H1 (cell line): ENCODE measurements at regions of chr10 and their contacts with region 1.

Region 1: DNA sequence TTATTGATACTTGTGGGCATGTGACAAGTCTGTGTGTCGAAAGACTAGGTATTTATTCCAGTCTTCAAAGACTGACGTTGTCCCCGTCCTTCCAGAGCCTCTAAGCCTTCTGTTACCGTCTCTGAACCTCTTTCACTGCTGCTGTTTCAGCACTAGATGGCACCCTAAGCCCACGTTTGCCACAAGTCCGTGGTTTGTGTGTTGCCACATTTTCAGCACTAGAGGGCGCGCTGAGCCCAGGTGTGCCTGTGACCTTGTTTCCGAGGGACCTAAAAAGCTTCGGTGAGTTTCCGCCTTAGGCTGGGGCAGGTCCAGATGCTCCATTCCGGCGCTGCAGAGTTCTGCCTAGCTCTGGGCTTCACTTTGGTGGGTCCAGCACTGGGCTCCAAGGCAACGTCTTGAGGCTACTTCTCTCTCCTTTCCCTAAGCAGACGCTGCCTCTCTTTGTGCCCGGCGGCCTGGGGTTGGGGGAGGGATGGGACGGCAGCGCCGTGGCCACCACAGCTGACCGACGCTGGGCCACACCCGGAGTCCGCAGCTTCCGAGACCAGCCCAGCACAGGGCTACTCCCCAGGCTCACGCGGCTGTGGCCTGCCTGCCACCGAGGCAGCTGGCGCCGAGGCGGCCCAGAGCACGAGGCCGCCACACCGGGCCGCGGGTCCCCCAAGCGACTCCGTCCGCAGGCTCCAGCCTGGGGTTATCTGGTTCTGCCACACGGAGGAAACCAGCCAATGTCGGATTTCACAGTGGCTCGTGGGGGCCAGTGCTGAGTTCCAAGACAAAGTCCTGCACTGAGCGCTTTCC is 520.2 kb downstream of the REEP3 start:
- DNase-seq: peak; percentile 84 to 92
- H3K4me3 ChIP-seq: no peak overlapping the region
- H3K27ac ChIP-seq: no peak overlapping the region
- H3K4me1 ChIP-seq: no peaks in the 10 kb centered on the region; a peak in 1 of 7 replicates
- H3K27me3 ChIP-seq: no peaks in the 10 kb centered on the region
- CTCF ChIP-seq: peak; percentile 98 to 100 (median 100)
- EP300 ChIP-seq: no peak; a peak in 1 of 3 replicates
- POLR2A ChIP-seq: no peak
- RAD21 ChIP-seq: peak; percentile 100

Region 2: DNA sequence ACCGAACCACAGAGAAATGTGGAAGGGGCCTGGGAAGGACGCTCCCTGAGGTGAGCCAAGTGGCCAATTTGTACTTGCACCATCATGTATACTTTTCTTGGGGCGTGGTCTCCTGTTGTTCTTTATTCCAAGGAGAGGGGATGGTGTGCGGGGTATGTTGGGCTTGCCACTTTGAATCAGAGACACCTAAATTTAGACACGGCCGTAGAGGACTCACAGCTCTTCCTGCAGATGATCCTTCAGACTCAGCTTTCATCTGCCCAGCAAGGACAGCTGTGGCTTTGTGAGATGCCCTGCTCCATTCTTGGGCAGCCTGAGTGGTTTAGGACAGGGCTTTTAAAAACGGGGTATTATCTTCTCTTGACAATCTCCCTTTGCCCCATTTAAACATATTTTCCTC is 47.0 kb before region 1 on chr10:
- CTCF ChIA-PET with region 1: no interaction called
- POLR2A ChIA-PET with region 1: no interaction called
- DNase-seq: no peak
- H3K4me3 ChIP-seq: no peak overlapping the region
- H3K27ac ChIP-seq: no peak overlapping the region
- H3K4me1 ChIP-seq: no peaks in the 10 kb centered on the region
- H3K27me3 ChIP-seq: no peaks in the 10 kb centered on the region
- CTCF ChIP-seq: no peak
- EP300 ChIP-seq: no peak
- POLR2A ChIP-seq: no peak
- RAD21 ChIP-seq: no peak

Region 3: DNA sequence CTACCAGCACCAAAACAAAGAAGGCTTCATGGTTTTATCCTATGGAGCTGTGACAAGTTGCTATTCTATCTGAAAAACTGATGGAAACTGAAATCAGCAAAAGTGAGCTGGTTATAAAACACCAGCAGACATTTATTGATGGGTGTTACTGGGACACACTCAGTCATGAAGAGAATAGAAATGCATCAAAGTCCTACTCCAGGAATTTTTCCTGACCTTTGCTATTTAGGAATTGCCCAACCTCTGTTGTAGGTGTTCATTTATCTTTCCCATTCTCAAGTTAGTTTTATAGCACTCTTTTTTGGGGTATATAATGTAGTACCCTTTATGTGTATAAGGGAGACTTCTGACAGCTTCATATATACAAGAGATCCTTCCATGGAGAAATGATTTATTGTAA is 13.0 kb after region 1 on chr10:
- CTCF ChIA-PET with region 1: interaction called, 11 read pairs
- POLR2A ChIA-PET with region 1: no interaction called
- DNase-seq: no peak
- H3K4me3 ChIP-seq: no peak overlapping the region
- H3K27ac ChIP-seq: no peak overlapping the region
- H3K4me1 ChIP-seq: no peaks in the 10 kb centered on the region
- H3K27me3 ChIP-seq: no peaks in the 10 kb centered on the region
- CTCF ChIP-seq: no peak
- EP300 ChIP-seq: no peak
- POLR2A ChIP-seq: no peak
- RAD21 ChIP-seq: no peak

Region 4: DNA sequence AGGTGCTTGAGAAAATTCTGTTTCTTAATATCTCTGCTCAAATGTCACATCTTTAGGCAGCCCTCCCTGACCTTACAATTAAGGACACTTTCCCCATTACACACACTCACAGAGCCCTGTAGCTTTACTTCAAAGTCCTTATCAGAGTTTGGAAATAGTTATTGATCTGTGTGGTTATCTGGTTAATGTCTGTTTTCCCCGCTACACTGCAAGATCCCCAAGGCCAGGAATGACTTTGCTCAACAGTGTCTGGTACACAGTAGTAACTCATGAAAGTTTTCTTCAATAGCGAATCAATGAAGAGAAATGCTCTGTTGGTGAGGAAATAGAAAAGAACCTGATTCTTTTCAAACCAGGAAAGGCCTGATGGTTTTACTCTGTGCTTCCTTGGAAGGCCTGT is 34.2 kb after region 1 on chr10:
- CTCF ChIA-PET with region 1: interaction called, 10 read pairs
- POLR2A ChIA-PET with region 1: no interaction called
- DNase-seq: no peak
- H3K4me3 ChIP-seq: no peak overlapping the region
- H3K27ac ChIP-seq: no peak overlapping the region
- H3K4me1 ChIP-seq: no peaks in the 10 kb centered on the region
- H3K27me3 ChIP-seq: no peaks in the 10 kb centered on the region
- CTCF ChIP-seq: no peak
- EP300 ChIP-seq: no peak
- POLR2A ChIP-seq: no peak
- RAD21 ChIP-seq: no peak

Region 5: DNA sequence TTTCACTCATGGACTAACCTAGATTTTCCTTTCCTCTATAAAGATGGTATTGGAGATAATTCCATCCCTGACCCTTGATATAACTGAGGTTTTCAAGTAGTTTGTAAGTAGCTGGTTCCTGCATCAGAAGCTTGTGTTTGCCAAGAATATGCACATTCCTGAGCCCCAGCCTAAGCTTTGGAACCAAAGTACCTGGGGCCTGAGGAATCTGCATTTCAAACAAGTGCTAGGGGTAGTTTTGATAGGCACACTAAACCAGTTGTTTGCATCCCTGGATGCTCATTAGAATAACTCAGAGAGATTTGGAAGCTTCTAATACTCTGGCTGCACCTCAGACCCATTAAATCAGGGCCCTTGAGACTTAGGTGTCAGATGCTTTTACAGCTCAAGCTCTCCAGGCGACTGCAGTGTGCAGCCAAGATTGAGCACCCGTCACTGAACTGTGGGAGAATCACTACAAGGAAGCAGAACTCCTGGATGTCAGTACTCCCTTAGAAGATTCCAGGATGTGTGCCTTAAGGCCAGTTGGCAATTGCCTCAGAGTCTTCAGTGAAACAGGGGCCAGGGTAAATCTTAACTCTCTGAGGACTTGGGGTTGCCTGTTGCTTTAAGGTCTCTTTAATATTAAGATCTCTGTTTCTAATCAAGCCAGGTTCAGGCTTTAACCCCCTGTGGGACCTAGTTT is 44.8 kb after region 1 on chr10:
- CTCF ChIA-PET with region 1: interaction called, 15 read pairs
- POLR2A ChIA-PET with region 1: no interaction called
- DNase-seq: peak; percentile 33 to 47
- H3K4me3 ChIP-seq: peak overlapping the region in 1 of 4 experiments; percentile 4; a peak in 1 of 8 replicates
- H3K27ac ChIP-seq: no peak overlapping the region
- H3K4me1 ChIP-seq: peaks cover 7 to 13% (median 11%) of the 10 kb centered on the region in 4 experiments; a peak in 6 of 7 replicates
- H3K27me3 ChIP-seq: peaks cover 0 to 11% (median 5%) of the 10 kb centered on the region in 4 experiments; a peak in 3 of 7 replicates
- CTCF ChIP-seq: no peak
- EP300 ChIP-seq: no peak
- POLR2A ChIP-seq: peak in 1 of 2 experiments; percentile 53; a peak in 1 of 3 replicates
- RAD21 ChIP-seq: no peak

Region 6: DNA sequence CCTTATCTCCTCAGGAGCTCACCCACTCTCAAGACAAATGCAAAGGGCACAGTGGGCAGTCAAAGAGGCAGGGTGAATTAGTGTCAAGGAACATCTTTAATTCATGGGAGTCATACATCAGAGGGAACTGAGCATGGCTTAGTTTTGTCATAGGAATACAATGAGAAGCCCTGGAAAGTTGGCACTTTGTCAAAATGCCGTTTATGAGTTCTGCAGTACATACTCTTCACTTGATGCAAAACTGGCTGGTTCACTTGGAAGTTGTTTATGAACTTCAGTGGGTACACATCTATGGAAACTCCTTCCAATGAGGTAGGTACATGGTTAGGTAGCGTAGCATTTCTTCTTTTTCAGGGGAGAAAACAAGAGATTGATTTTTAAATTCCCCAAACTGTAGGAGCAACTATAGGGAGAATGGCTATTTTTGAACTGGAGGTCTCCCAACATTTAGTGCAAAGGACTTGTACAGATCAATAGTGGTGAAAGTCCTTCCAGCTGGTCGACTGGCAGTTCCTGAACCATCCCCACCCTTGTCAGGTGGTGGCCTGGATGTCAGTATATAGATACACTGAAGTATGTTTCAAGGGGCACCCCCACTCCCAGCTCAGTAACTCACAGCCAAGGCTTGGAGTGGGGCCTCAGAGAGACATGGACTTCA is 60.3 kb after region 1 on chr10:
- CTCF ChIA-PET with region 1: interaction called, 11 read pairs
- POLR2A ChIA-PET with region 1: no interaction called
- DNase-seq: no peak
- H3K4me3 ChIP-seq: no peak overlapping the region
- H3K27ac ChIP-seq: no peak overlapping the region
- H3K4me1 ChIP-seq: no peaks in the 10 kb centered on the region; a peak in 1 of 7 replicates
- H3K27me3 ChIP-seq: no peaks in the 10 kb centered on the region
- CTCF ChIP-seq: no peak
- EP300 ChIP-seq: no peak
- POLR2A ChIP-seq: no peak
- RAD21 ChIP-seq: no peak

Region 7: DNA sequence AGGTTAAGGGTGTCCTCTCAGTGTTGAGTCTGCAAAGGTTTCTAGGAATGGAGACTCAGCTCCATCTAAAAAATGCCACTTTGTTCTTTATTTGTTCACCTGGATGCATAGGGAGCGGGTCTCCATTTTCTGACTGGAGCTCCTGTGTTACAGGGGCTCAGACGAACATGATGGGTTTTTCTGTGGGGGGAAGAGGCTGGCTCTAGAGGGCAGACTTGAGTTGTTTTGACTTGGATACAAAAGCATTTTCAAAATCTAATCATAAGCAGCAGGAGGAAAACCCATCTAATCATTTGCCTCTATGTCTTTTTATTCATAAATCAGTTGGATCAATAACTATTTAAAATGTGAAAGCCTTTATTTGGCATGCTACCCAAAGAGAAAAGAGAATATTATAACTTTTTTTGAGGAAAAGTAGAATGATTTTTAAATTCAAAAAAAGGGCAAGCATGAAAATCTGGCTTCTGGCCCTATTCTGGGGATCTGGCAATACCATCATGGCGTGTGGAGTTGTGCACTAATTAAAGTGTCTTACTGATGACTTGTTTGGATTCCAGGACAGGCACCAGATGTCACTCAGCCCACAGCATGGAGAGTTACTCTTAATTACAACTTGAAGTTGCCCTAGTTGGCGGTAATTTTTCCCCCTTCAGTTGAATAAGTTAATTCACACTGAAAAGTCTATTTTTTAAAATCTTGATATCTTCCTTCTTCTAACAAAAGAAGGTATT is 74.7 kb after region 1 on chr10:
- CTCF ChIA-PET with region 1: interaction called, 17 read pairs
- POLR2A ChIA-PET with region 1: no interaction called
- DNase-seq: no peak
- H3K4me3 ChIP-seq: no peak overlapping the region
- H3K27ac ChIP-seq: no peak overlapping the region
- H3K4me1 ChIP-seq: peaks cover 0 to 4% (median 0%) of the 10 kb centered on the region in 4 experiments; a peak in 2 of 7 replicates
- H3K27me3 ChIP-seq: no peaks in the 10 kb centered on the region
- CTCF ChIP-seq: peak; percentile 39 to 66 (median 55)
- EP300 ChIP-seq: no peak
- POLR2A ChIP-seq: no peak
- RAD21 ChIP-seq: peak; percentile 70 to 73